ENCODE measurements at regions of chr5 and their contacts with region 1.

Region 1: GRCh38 chr5:157502143-157502647 is 42.2 kb downstream of the NIPAL4 start:
- DNase-seq: peak; percentile 91
- H3K4me3 ChIP-seq: peak overlapping the region; percentile 42
- H3K27ac ChIP-seq: peak overlapping the region; percentile 100
- H3K4me1 ChIP-seq: peaks cover 93% of the 10 kb centered on the region
- CTCF ChIP-seq: no peak

Region 2: DNA sequence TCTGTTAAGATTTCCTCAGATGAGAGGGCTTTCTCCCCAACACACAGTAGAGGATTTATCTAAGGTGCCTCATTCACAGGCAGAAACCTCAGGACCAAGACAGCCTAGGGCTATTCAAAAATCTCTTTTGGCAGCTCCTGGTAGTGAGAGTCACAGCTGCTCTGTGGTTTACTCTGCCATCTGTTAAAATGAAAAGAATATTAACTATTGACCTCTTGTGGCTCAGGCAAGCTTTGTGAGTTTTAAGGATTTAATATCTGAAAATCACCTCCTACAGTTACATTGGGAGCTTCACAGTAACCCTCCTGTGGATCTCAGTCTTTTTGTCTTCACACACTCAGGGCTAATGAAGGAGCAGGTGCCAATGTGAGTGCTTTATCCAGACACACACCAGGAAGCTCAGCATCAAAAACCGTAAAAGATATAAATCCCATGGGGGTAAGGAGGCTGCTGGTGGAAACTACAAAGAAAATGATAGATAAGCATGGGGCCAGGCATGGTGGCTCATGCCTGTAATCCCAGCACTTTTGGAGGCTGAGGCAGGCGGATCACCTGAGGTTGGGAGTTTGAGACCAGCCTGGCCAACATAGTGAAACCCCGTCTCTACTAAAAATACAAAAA is 622.4 kb before region 1 on chr5:
- CTCF ChIA-PET with region 1: no interaction called
- POLR2A ChIA-PET with region 1: no interaction called
- intact Hi-C with region 1: loop called (anchors 10 kb)
- DNase-seq: peak; percentile 89
- H3K4me3 ChIP-seq: peak overlapping the region; percentile 11
- H3K27ac ChIP-seq: peak overlapping the region; percentile 98
- H3K4me1 ChIP-seq: peaks cover 72% of the 10 kb centered on the region
- CTCF ChIP-seq: peak; percentile 47

Region 3: GRCh38 chr5:157486221-157486681 is 15.9 kb before region 1 on chr5:
- CTCF ChIA-PET with region 1: interaction called, 6 read pairs
- POLR2A ChIA-PET with region 1: interaction called, 32 read pairs
- intact Hi-C with region 1: loop called (anchors 1 kb)
- DNase-seq: peak; percentile 81
- H3K4me3 ChIP-seq: peak overlapping the region; percentile 22
- H3K27ac ChIP-seq: peak overlapping the region; percentile 96
- H3K4me1 ChIP-seq: peaks cover 57% of the 10 kb centered on the region
- CTCF ChIP-seq: no peak

Region 4: GRCh38 chr5:157575381-157576020 is 73.3 kb after region 1 on chr5 and contains the start of gene ADAM19:
- CTCF ChIA-PET with region 1: interaction called, 5 read pairs
- POLR2A ChIA-PET with region 1: interaction called, 6 read pairs
- intact Hi-C with region 1: loop called (anchors 1 kb)
- DNase-seq: peak; percentile 75
- H3K4me3 ChIP-seq: peak within 1 kb of the TSS; percentile 81
- H3K27ac ChIP-seq: peak within 1 kb of the TSS; percentile 28
- H3K4me1 ChIP-seq: peaks cover 54% of the 10 kb centered on the region
- CTCF ChIP-seq: 0 out of 2 replicates have a peak, but pooled peaks have one; percentile 6
- total RNA-seq, gene ADAM19: 19.0 and 24.2 TPM in 2 replicates

Region 5: DNA sequence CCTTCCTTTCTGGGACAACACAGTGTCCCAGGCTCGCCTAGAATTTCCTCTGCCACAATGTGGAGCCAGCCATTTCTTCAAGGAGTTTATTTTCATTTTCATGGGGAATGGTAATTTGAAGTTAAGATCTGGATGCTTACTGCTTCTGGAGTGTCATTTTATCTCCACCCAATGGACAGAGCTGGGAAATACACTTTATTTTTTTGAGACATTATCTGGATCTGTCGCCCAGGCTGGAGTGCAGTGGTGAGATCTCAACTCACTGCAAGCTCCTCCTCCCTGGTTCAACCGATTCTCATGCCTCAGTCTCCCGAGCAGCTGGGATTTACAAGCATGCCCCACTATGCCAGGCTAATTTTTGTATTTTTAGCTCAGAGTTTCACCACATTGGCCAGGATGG is 216.3 kb after region 1 on chr5:
- CTCF ChIA-PET with region 1: interaction called, 3 read pairs
- POLR2A ChIA-PET with region 1: interaction called, 3 read pairs
- intact Hi-C with region 1: loop called (anchors 2 kb)
- DNase-seq: peak; percentile 70
- H3K4me3 ChIP-seq: no peak overlapping the region
- H3K27ac ChIP-seq: no peak overlapping the region
- H3K4me1 ChIP-seq: peaks cover 19% of the 10 kb centered on the region
- CTCF ChIP-seq: peak; percentile 82

Measured in OCI-LY7 (cell line).